ENCODE measurements at regions of chr16 and their contacts with region 1.

Region 1: DNA sequence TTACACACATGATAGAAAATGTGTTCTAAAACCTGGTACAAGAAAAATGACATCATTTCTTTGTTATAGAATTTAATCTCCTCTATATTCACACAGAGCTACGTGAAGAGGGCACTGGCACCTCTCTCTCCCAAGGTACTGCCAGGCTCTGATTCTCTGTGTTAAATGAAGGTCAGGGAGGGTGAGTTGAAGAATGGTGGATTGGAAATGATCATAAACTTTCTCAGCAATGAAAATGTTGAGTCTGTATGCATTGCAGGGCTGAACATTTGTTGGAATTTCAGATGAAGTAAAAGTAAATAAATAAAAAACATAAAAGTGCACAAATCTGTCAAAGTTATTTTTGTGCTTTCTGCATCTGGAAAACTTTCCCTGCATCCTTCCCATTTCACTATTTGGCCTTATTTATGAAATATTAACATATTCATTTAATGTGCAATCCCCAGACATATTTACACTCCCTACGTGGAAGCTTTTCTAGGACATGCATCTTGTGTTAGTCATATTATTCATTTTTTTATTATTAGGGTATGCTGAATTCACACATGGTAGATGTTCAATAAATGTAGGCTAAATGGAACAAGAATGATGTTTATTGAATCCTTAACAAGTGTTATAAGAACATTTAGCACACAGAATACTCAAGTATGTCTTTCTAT is 810.3 kb upstream of the CDH8 start:
- DNase-seq: no peak
- H3K4me3 ChIP-seq: no peak overlapping the region
- H3K27ac ChIP-seq: no peak overlapping the region
- H3K4me1 ChIP-seq: no peaks in the 10 kb centered on the region
- H3K27me3 ChIP-seq: no peaks in the 10 kb centered on the region

Region 2: GRCh38 chr16:62760398-62760797 is 86.1 kb before region 1 on chr16:
- in situ Hi-C with region 1: no loop called
- DNase-seq: no peak
- H3K4me3 ChIP-seq: no peak overlapping the region
- H3K27ac ChIP-seq: no peak overlapping the region
- H3K4me1 ChIP-seq: no peaks in the 10 kb centered on the region
- H3K27me3 ChIP-seq: no peaks in the 10 kb centered on the region

Region 3: GRCh38 chr16:62903961-62904502 is 57.5 kb after region 1 on chr16:
- in situ Hi-C with region 1: loop called (anchors 10 kb)
- DNase-seq: no peak
- H3K4me3 ChIP-seq: no peak overlapping the region
- H3K27ac ChIP-seq: no peak overlapping the region
- H3K4me1 ChIP-seq: no peaks in the 10 kb centered on the region
- H3K27me3 ChIP-seq: no peaks in the 10 kb centered on the region

Measured in GM23248 (cell line).